ENCODE measurements at regions of chr2 and their contacts with region 1.

Region 1: GRCh38 chr2:198309673-198310280 is 505.4 kb downstream of the PLCL1 start:
- DNase-seq: peak in 2 of 4 donors; percentile 39 to 58
- ATAC-seq: peak; percentile 62
- H3K4me3 ChIP-seq: no peak overlapping the region
- H3K27ac ChIP-seq: no peak overlapping the region
- H3K4me1 ChIP-seq: no peaks in the 10 kb centered on the region
- H3K27me3 ChIP-seq: peaks cover 7 to 31% of the 10 kb centered on the region in 2 donors
- CTCF ChIP-seq: peak; percentile 70 to 89

Region 2: GRCh38 chr2:198144660-198145059 is 165.1 kb before region 1 on chr2:
- intact Hi-C with region 1: no loop called
- DNase-seq: no peak
- ATAC-seq: no peak
- H3K4me3 ChIP-seq: no peak overlapping the region
- H3K27ac ChIP-seq: no peak overlapping the region
- H3K4me1 ChIP-seq: no peaks in the 10 kb centered on the region
- H3K27me3 ChIP-seq: no peaks in the 10 kb centered on the region
- CTCF ChIP-seq: no peak

Region 3: GRCh38 chr2:199488772-199489400 is 1179.1 kb after region 1 on chr2:
- intact Hi-C with region 1: loop called in 1 of 2 experiments (anchors 10 kb)
- DNase-seq: peak in 1 of 4 donors; percentile 53
- ATAC-seq: peak; percentile 77
- H3K4me3 ChIP-seq: no peak overlapping the region
- H3K27ac ChIP-seq: no peak overlapping the region
- H3K4me1 ChIP-seq: no peaks in the 10 kb centered on the region
- H3K27me3 ChIP-seq: peaks cover 0 to 30% of the 10 kb centered on the region in 2 donors
- CTCF ChIP-seq: peak; percentile 59 to 72

Measured in left lung (tissue), 14 donors.